ENCODE measurements at regions of chr7 and their contacts with region 1.

Region 1: DNA sequence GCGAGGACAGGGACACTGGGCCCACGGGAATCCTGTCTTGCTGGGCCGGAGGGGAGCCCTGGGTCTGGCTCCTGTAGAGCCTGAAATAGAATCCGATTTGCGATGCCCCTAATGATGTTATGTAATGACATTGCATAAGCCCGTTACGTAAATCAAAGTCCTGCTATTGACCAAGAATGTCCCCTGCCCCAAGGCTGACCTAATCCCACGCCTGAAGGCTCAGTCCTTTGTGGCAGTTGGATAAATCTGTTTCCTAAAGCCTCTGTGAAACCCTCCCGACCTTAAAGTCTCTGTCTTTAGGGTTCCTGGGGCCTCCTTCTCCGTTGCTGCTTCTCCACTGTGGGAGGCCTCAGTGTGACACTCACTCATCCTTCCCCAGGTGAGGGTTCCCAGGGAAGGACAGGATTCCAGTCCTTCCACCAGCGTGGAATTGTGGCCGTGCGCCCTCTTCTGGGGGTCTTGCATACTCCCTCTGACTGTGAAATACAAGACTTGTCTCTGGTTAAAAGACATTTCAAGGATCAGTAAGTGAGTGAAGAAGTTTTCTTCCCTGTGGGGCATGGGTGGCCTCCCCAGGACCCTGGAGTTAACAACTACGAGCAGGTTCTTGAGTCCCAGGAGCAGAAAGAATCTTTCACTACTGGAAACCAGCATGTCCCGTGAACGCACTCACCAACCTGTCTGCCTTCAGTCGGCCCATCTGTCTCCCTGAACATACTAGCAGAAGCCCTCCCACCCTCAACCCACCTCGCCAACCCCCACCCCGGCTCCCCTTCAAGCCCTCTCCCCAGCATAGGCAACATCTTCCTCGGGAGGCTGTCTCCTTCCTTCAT is 19.8 kb downstream of the ZNF467 start:
- DNase-seq: peak; percentile 55
- H3K4me3 ChIP-seq: no peak overlapping the region
- H3K27ac ChIP-seq: no peak overlapping the region
- H3K4me1 ChIP-seq: no peaks in the 10 kb centered on the region
- H3K27me3 ChIP-seq: peaks cover 0 to 2% of the 10 kb centered on the region in 2 experiments
- CTCF ChIP-seq: peak; percentile 60 to 72
- POLR2A ChIP-seq: no peak

Region 2: GRCh38 chr7:149477506-149478443 is 275.8 kb before region 1 on chr7:
- CTCF ChIA-PET with region 1: no interaction called
- POLR2A ChIA-PET with region 1: no interaction called
- dilution Hi-C with region 1: no loop called
- intact Hi-C with region 1: no loop called
- DNase-seq: no peak
- H3K4me3 ChIP-seq: no peak overlapping the region
- H3K27ac ChIP-seq: no peak overlapping the region
- H3K4me1 ChIP-seq: no peaks in the 10 kb centered on the region
- H3K27me3 ChIP-seq: no peaks in the 10 kb centered on the region
- CTCF ChIP-seq: no peak
- POLR2A ChIP-seq: no peak

Region 3: DNA sequence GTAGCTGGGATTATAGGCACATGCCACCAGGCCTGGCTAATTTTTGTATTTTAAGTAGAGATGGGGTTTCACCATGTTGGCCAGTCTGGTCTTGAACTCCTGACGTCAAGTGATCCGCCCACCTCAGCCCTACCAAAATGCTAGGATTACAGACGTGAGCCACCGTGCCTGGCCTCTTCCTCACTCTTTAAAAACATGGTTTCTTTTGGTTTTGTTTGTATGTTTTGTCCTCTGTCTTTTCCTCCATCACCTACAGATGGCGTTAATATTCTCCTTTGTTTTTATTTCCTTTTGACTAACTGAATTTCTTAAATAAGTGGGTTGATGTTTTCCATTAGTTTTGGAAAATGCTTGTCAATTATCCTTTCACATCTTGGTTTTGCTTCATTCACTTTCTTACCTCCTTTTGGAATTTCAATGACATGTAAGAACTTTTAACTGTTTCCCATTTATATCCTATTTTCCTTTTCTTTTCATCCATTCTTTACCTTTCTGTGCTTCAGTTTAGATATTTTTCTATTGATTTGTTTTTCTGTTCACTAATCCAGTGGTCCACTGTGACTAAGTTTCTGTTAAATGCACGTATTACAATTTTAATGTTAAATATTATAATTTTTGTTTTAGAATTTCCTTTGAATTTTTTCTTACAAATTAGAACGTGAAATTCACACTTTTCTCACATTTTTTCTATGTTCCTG is 84.3 kb before region 1 on chr7:
- CTCF ChIA-PET with region 1: interaction called, 5 read pairs
- POLR2A ChIA-PET with region 1: no interaction called
- dilution Hi-C with region 1: no loop called
- intact Hi-C with region 1: loop called (anchors 1 kb)
- DNase-seq: peak; percentile 42
- H3K4me3 ChIP-seq: no peak overlapping the region
- H3K27ac ChIP-seq: no peak overlapping the region
- H3K4me1 ChIP-seq: no peaks in the 10 kb centered on the region
- H3K27me3 ChIP-seq: peaks cover 5 to 16% of the 10 kb centered on the region in 2 experiments
- CTCF ChIP-seq: peak; percentile 27 to 34
- POLR2A ChIP-seq: no peak

Region 4: DNA sequence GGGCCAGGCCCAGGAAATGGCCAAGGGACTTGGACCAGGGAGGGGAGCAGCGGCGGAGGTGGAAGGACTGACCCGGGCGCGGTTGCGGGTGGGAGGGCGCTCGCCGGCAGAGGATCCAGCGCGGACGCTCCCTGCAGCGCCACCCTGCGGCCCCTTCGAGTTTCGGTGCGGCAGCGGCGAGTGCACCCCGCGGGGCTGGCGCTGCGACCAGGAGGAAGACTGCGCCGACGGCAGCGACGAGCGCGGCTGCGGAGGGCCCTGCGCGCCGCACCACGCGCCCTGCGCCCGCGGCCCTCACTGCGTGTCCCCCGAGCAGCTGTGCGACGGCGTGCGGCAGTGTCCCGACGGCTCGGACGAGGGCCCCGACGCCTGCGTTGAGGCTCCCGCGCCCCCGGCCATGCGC is 36.5 kb after region 1 on chr7:
- CTCF ChIA-PET with region 1: interaction called, 4 read pairs
- POLR2A ChIA-PET with region 1: no interaction called
- dilution Hi-C with region 1: no loop called
- intact Hi-C with region 1: loop called (anchors 1 kb)
- DNase-seq: peak; percentile 41
- H3K4me3 ChIP-seq: no peak overlapping the region
- H3K27ac ChIP-seq: no peak overlapping the region
- H3K4me1 ChIP-seq: no peaks in the 10 kb centered on the region
- H3K27me3 ChIP-seq: peaks cover 4 to 10% of the 10 kb centered on the region in 2 experiments
- CTCF ChIP-seq: peak; percentile 60 to 84
- POLR2A ChIP-seq: no peak